ENCODE measurements at regions of chr19 and their contacts with region 1.

Region 1: GRCh38 chr19:46759817-46760333 is 13.6 kb upstream of the STRN4 start:
- DNase-seq: no peak
- H3K4me3 ChIP-seq: no peak overlapping the region
- H3K27ac ChIP-seq: no peak overlapping the region
- H3K4me1 ChIP-seq: peaks cover 0 to 5% (median 0%) of the 10 kb centered on the region in 4 experiments; a peak in 4 of 7 replicates
- H3K27me3 ChIP-seq: no peaks in the 10 kb centered on the region
- CTCF ChIP-seq: no peak
- EP300 ChIP-seq: no peak
- POLR2A ChIP-seq: no peak
- RAD21 ChIP-seq: no peak

Region 2: GRCh38 chr19:46661020-46661731 is 98.7 kb before region 1 on chr19 and contains the start of gene DACT3:
- CTCF ChIA-PET with region 1: no interaction called
- POLR2A ChIA-PET with region 1: no interaction called
- DNase-seq: peak; percentile 100
- H3K4me3 ChIP-seq: peak within 1 kb of the TSS; percentile 47 to 71 (median 54)
- H3K27ac ChIP-seq: no peak within 1 kb of the TSS
- H3K4me1 ChIP-seq: peaks cover 0 to 14% (median 9%) of the 10 kb centered on the region in 4 experiments; a peak in 6 of 7 replicates
- H3K27me3 ChIP-seq: peaks cover 0 to 17% (median 11%) of the 10 kb centered on the region in 4 experiments; a peak in 4 of 7 replicates
- CTCF ChIP-seq: no peak
- EP300 ChIP-seq: no peak
- POLR2A ChIP-seq: no peak
- RAD21 ChIP-seq: no peak
- total RNA-seq, gene DACT3: 1.5 and 2.0 TPM in 2 replicates

Region 3: DNA sequence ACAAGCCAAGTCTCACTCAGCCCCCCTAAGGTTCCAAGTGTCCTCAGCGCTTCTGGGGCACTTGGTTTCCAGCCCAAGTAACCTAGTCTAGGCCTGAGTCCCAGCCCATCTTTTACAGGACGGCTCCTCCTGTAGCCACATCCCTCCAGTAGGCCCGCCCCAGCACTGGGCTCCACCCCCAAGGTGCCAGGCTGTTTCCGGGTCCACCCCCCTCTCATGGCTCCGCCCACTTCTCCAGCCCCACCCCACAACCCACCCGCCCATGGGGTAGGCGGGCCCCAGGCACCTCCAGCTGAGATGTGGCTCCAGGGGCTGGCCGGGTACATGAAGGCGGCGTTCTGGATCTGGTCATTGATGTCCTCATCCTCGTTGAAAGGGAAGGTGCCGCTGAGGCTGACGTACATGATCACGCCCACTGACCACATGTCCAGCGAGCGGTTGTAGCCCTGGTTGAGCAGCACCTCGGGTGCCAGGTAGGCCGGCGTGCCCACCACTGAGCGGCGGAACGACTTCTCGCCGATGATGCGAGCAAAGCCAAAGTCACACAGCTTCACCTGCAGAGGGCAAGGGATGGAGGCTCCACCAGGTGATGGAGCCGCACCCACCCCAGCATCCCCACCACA is 81.7 kb before region 1 on chr19:
- CTCF ChIA-PET with region 1: no interaction called
- POLR2A ChIA-PET with region 1: no interaction called
- DNase-seq: peak in 1 of 2 experiments; percentile 91
- H3K4me3 ChIP-seq: no peak overlapping the region
- H3K27ac ChIP-seq: no peak overlapping the region
- H3K4me1 ChIP-seq: peaks cover 0 to 5% (median 0%) of the 10 kb centered on the region in 4 experiments; a peak in 3 of 7 replicates
- H3K27me3 ChIP-seq: no peaks in the 10 kb centered on the region
- CTCF ChIP-seq: no peak
- EP300 ChIP-seq: no peak
- POLR2A ChIP-seq: no peak
- RAD21 ChIP-seq: no peak

Region 4: DNA sequence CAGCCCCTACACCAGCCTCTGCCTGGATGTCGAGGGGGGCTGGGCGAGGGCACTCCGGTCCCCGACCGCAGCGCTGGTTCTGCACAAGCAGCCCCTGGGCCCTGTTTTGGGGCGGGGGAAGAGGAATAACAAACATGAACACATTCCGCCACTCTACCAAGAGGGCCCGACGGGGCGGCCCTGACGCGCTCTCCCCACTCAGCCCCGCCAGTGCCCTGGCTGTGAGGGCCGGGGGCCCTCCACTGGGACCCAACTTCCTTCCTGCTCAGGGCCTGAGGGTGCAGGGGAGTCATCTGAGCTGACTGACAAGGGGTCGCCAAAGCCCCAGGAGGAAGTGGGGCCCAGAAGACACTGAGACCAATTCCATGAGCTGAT is 37.5 kb before region 1 on chr19:
- CTCF ChIA-PET with region 1: no interaction called
- POLR2A ChIA-PET with region 1: no interaction called
- DNase-seq: no peak
- H3K4me3 ChIP-seq: no peak overlapping the region
- H3K27ac ChIP-seq: no peak overlapping the region
- H3K4me1 ChIP-seq: peaks cover 0 to 12% (median 2%) of the 10 kb centered on the region in 4 experiments; a peak in 6 of 7 replicates
- H3K27me3 ChIP-seq: no peaks in the 10 kb centered on the region
- CTCF ChIP-seq: no peak
- EP300 ChIP-seq: no peak
- POLR2A ChIP-seq: no peak
- RAD21 ChIP-seq: no peak

Region 5: GRCh38 chr19:46776927-46777911 is 17.3 kb after region 1 on chr19:
- CTCF ChIA-PET with region 1: interaction called, 176 read pairs
- POLR2A ChIA-PET with region 1: interaction called, 333 read pairs
- DNase-seq: peak; percentile 60 to 79
- H3K4me3 ChIP-seq: no peak overlapping the region
- H3K27ac ChIP-seq: no peak overlapping the region
- H3K4me1 ChIP-seq: peaks cover 0 to 1% (median 0%) of the 10 kb centered on the region in 4 experiments; a peak in 1 of 7 replicates
- H3K27me3 ChIP-seq: no peaks in the 10 kb centered on the region
- CTCF ChIP-seq: no peak
- EP300 ChIP-seq: no peak
- POLR2A ChIP-seq: no peak
- RAD21 ChIP-seq: no peak

Region 6: DNA sequence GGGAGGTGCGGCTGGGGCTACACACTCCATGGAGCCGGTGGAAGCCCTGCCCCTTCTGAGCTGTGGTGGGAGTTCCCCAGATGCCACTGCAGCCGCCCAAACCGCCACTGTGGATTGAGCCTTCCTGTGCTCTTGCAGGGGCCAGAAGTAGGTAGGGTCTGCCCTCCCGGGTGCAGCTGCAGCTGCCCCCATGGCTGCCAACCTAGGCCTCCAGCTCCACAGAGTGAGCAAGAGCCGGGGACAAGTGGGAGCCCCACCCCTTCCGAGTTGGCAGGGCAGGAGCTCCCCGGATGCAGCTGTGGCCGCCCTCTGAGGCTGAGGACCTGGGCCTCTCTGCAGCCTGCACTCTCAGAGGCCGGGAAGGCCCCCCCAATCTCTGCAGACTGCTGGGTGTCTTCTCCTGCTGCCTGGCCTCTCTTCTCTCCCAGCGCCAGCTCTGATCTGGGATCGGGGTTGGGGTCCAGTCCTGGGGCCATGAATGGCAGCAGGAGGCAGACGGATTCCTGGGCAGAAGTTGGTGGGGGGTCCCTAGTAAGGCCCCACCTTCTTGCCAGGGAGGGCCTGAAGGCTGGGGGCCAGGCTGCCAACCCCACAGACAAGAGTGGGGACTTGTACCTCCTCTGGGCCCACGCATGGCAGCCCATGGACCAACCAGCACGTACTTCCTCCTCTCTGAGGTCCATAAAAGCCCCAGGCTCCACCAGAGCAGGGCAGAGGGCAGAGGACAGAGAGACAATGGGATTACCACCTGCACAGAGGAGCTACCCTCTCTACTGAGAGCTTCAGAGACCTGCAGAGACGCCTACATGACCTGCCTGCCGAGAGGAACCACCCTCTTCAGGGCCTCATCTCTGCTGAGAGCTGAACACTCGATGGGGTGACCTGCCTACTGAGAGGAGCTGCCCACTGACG is 61.9 kb after region 1 on chr19:
- CTCF ChIA-PET with region 1: interaction called, 13 read pairs
- POLR2A ChIA-PET with region 1: interaction called, 3 read pairs
- DNase-seq: no peak
- H3K4me3 ChIP-seq: no peak overlapping the region
- H3K27ac ChIP-seq: no peak overlapping the region
- H3K4me1 ChIP-seq: no peaks in the 10 kb centered on the region; a peak in 1 of 7 replicates
- H3K27me3 ChIP-seq: no peaks in the 10 kb centered on the region
- CTCF ChIP-seq: no peak
- EP300 ChIP-seq: no peak
- POLR2A ChIP-seq: no peak
- RAD21 ChIP-seq: no peak